Calu3 (cell line): ENCODE measurements at regions of chr15 and their contacts with region 1.

Region 1: DNA sequence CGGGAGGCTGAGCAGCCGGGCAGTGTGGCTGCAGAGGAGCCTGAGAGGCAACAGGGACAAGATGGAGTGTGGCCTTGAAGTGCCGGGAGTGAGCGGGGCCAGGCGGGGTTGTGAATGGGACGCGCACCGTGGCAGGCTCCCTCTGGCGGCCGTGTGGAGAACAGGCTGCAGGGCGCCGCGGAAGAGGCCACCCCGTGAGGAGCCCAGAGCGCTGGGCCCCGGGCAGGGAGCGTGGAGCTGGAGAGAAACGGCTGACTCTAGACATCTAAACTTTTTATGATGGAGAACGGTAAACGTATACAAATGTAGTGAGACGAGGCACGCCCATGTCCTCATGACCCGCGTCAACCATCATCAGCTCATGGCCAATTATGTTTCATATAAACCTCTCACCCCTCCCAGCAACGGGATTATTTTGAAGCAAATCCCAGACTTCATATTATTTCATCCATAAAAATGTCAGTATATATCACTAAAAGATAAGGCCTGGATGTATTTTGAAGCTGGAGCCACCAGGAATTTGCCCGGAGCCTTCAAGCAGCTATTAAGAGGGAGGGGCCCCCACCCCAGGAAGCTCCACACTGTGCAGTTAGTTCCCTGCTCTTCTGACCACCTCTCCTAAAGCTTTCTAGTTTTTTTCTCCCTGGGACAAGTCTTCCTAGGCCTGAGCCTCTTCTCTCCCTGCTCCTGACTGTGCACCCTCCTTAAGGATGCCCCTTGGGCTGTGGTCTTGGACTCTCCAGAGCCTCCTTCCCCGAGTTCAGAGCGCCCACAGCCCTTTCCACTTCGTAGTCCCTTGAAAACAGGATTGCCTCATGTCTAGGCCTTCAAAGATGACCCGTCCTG is 149.4 kb downstream of the SMAD6 start:
- DNase-seq: peak; percentile 92
- H3K4me3 Mint-ChIP-seq: no peak overlapping the region
- H3K27ac Mint-ChIP-seq: no peak overlapping the region
- H3K4me1 Mint-ChIP-seq: peaks cover 17% of the 10 kb centered on the region
- H3K27me3 Mint-ChIP-seq: peaks cover 8% of the 10 kb centered on the region
- CTCF ChIP-seq: peak; percentile 89

Region 2: GRCh38 chr15:66580643-66581042 is 270.8 kb before region 1 on chr15:
- CTCF ChIA-PET with region 1: no interaction called
- intact Hi-C with region 1: no loop called
- DNase-seq: no peak
- H3K4me3 Mint-ChIP-seq: no peak overlapping the region
- H3K27ac Mint-ChIP-seq: no peak overlapping the region
- H3K4me1 Mint-ChIP-seq: no peaks in the 10 kb centered on the region
- H3K27me3 Mint-ChIP-seq: peaks cover under 1% of the 10 kb centered on the region
- CTCF ChIP-seq: no peak

Region 3: DNA sequence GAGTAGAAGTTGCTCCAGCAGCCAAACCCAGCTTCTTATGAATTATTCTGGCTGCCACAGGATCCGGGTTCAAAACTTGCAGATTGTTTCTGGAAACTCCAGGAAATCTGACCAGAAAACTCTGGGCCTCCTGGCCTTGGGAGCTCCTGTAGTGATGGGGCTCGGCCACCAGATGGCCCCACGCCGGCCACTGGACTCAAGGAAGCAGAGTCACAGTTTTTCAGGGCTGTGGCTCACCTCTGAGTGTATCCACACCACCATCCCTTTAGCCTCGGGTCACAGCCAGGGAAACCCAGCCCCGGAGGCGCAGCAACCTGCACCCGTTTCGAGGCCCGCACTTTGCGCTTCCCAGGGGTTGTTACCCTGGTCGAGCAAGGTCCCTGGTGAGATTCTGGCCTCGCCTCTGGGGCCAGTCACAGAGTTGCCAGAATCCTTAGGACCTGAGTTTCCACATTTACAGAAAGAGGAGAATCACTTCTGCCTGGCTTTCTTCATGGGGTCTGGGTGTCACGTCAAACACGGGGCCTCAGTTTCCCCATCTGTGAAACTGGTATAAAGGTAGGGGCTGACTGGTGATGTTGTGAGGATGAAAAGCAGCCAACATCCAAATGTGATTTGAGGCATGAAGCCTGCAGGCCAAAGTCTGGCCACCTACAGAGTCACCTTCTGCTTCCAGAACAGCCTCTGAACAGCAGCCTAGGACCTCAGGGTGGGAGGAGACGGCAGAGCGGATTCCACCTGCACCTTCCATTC is 232.1 kb before region 1 on chr15:
- CTCF ChIA-PET with region 1: interaction called, 6 read pairs
- intact Hi-C with region 1: loop called (anchors 5 kb)
- DNase-seq: peak; percentile 92
- H3K4me3 Mint-ChIP-seq: no peak overlapping the region
- H3K27ac Mint-ChIP-seq: no peak overlapping the region
- H3K4me1 Mint-ChIP-seq: peaks cover 30% of the 10 kb centered on the region
- H3K27me3 Mint-ChIP-seq: peaks cover 32% of the 10 kb centered on the region
- CTCF ChIP-seq: peak; percentile 78

Region 4: GRCh38 chr15:66751541-66751952 is 99.9 kb before region 1 on chr15:
- CTCF ChIA-PET with region 1: interaction called, 14 read pairs
- intact Hi-C with region 1: no loop called
- DNase-seq: peak; percentile 86
- H3K4me3 Mint-ChIP-seq: peak overlapping the region; percentile 35
- H3K27ac Mint-ChIP-seq: peak overlapping the region; percentile 88
- H3K4me1 Mint-ChIP-seq: peaks cover 79% of the 10 kb centered on the region
- H3K27me3 Mint-ChIP-seq: no peaks in the 10 kb centered on the region
- CTCF ChIP-seq: no peak

Region 5: DNA sequence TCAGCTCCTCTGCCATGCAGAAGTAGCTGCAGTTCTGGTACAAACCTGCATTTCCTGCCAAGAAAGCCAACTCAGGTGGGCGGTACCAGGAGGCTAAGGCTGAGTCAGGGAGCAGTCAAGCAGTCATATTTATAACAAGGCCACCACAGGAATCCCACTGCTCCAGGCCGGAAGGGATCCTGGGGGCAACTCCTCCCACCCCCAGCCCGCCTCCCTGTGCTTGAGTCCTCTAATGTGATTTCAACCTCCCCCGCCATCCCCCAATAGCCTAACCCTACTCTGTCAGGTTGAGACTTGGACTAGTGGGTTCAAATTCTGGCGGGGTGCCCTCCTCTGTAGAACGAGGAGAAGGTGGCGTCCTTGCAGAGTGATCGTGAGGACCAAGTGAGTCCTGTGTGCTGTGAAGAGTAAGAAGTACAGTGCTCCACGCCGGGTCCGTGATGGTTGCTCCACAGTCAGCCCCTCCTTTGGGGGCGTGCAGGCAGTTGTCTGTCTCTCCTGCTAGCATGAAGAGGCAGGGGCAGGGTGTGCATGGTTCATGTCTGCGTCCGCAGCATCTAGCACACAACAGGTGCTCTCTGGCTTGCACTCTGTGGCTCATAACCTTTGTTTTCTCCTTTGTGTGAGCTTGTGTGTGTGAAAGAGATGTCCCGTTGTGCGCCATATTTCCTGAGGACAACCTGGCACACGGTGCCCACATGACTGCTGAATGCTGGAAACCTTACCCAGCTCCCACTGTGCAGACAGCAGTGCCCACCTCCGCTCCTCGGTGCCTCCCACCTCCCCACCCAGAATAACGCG is 71.1 kb before region 1 on chr15:
- CTCF ChIA-PET with region 1: interaction called, 23 read pairs
- intact Hi-C with region 1: no loop called
- DNase-seq: peak; percentile 67
- H3K4me3 Mint-ChIP-seq: no peak overlapping the region
- H3K27ac Mint-ChIP-seq: peak overlapping the region; percentile 17
- H3K4me1 Mint-ChIP-seq: peaks cover 41% of the 10 kb centered on the region
- H3K27me3 Mint-ChIP-seq: no peaks in the 10 kb centered on the region
- CTCF ChIP-seq: no peak

Region 6: GRCh38 chr15:66803182-66803729 is 48.2 kb before region 1 on chr15:
- CTCF ChIA-PET with region 1: interaction called, 6 read pairs
- intact Hi-C with region 1: loop called (anchors 5 kb)
- DNase-seq: peak; percentile 96
- H3K4me3 Mint-ChIP-seq: peak overlapping the region; percentile 9
- H3K27ac Mint-ChIP-seq: peak overlapping the region; percentile 79
- H3K4me1 Mint-ChIP-seq: peaks cover 25% of the 10 kb centered on the region
- H3K27me3 Mint-ChIP-seq: no peaks in the 10 kb centered on the region
- CTCF ChIP-seq: no peak